Naive thymus-derived CD4-positive, alpha-beta T cell (primary cell): ENCODE measurements at regions of chr1 and their contacts with region 1.

Region 1: GRCh38 chr1:154747740-154748404 is 122.2 kb downstream of the KCNN3 start:
- DNase-seq: peak in 8 of 9 donors; percentile 51 to 64 (median 56)
- ATAC-seq: peak; percentile 82
- H3K4me3 ChIP-seq: peak overlapping the region; percentile 46
- H3K4me3 Mint-ChIP-seq: peak overlapping the region; percentile 71 to 88 (median 84)
- H3K27ac ChIP-seq: peak overlapping the region; percentile 73
- H3K27ac Mint-ChIP-seq: peak overlapping the region; percentile 90 to 98 (median 96)
- H3K4me1 ChIP-seq: peaks cover 39 to 47% of the 10 kb centered on the region in 2 donors
- H3K4me1 Mint-ChIP-seq: peaks cover 46 to 70% (median 51%) of the 10 kb centered on the region in 7 donors
- H3K27me3 ChIP-seq: no peaks in the 10 kb centered on the region
- H3K27me3 Mint-ChIP-seq: peaks cover 0 to 24% (median 0%) of the 10 kb centered on the region in 5 donors

Region 2: DNA sequence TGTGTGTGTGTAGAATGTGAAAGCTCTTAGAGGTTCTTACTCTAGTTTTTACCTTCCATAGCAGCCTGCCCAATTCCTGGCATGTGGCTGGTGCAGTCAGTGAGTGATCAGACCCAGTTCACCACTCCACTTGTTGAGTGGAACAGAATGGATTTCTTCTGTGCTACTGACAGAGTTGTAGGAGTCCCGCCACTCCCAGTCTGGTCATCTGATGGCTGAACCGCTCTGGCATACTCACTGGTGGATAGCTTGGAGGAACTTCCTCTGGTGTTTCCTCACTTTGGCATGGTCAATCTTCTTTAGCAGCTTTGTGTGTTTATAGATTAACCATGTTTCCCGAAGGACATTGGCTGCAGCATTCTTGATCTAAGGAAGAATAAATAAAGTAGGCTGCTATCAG is 33.2 kb before region 1 on chr1:
- CTCF ChIA-PET with region 1: no interaction called
- POLR2A ChIA-PET with region 1: interaction called, 3 read pairs
- intact Hi-C with region 1: loop called in 1 of 2 experiments (anchors 5 kb)
- DNase-seq: peak in 2 of 9 donors; percentile 2 to 3
- ATAC-seq: peak; percentile 74
- H3K4me3 ChIP-seq: no peak overlapping the region
- H3K4me3 Mint-ChIP-seq: no peak overlapping the region
- H3K27ac ChIP-seq: no peak overlapping the region
- H3K27ac Mint-ChIP-seq: peak overlapping the region in 1 of 9 donors; percentile 73
- H3K4me1 ChIP-seq: peaks cover 4 to 16% of the 10 kb centered on the region in 2 donors
- H3K4me1 Mint-ChIP-seq: peaks cover 4 to 20% (median 17%) of the 10 kb centered on the region in 7 donors
- H3K27me3 ChIP-seq: no peaks in the 10 kb centered on the region
- H3K27me3 Mint-ChIP-seq: peaks cover 0 to 12% (median 0%) of the 10 kb centered on the region in 5 donors